Natural killer cell (primary cell): ENCODE measurements at regions of chr11 and their contacts with region 1.

Region 1: DNA sequence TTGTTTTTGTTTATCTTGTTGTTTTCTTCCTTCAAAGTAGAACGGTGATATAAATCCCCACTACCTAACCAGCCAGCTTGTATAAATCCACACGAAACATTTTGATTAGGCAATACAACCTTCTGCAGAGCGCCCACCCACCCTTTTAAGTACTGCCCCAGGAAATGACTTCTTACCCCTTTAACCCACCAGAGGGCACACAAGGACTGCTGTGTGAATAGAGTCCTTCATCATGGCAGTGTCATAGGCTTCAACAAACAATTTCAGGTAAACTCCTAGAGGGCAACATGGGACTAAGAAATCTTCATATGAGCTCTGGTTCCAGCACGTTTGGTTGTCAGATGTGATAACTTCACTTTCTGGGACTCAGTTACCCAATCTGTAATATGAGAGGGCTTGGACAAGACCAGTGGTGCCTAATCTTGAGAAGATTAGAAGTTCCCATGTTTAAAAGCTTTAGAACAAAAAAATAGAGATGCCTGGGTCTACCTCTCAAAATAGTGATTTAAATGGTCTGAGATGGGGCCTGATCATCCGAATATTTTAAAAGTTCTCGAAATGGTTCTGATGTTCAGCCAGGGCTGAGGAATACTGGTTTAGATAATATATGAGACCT is 56.1 kb downstream of the PIWIL4 start:
- DNase-seq: peak in 1 of 2 donors; percentile 72
- ATAC-seq: peak; percentile 55 to 82 (median 75)
- H3K4me3 ChIP-seq: no peak overlapping the region
- H3K4me3 Mint-ChIP-seq: no peak overlapping the region
- H3K27ac ChIP-seq: no peak overlapping the region
- H3K27ac Mint-ChIP-seq: no peak overlapping the region
- H3K4me1 ChIP-seq: no peaks in the 10 kb centered on the region
- H3K4me1 Mint-ChIP-seq: no peaks in the 10 kb centered on the region
- H3K27me3 ChIP-seq: no peaks in the 10 kb centered on the region
- H3K27me3 Mint-ChIP-seq: peaks cover 0 to 6% of the 10 kb centered on the region in 2 donors
- CTCF ChIP-seq: peak; percentile 48

Region 2: GRCh38 chr11:94876645-94877442 is 253.6 kb after region 1 on chr11:
- intact Hi-C with region 1: loop called (anchors 5 kb)
- DNase-seq: peak; percentile 25 to 35
- ATAC-seq: peak; percentile 78 to 99 (median 94)
- H3K4me3 ChIP-seq: no peak overlapping the region
- H3K4me3 Mint-ChIP-seq: no peak overlapping the region
- H3K27ac ChIP-seq: no peak overlapping the region
- H3K27ac Mint-ChIP-seq: peak overlapping the region; percentile 59 to 81
- H3K4me1 ChIP-seq: peaks cover 11% of the 10 kb centered on the region
- H3K4me1 Mint-ChIP-seq: peaks cover 9 to 12% of the 10 kb centered on the region in 2 donors
- H3K27me3 ChIP-seq: no peaks in the 10 kb centered on the region
- H3K27me3 Mint-ChIP-seq: no peaks in the 10 kb centered on the region
- CTCF ChIP-seq: no peak

Region 3: GRCh38 chr11:94897330-94897768 is 274.1 kb after region 1 on chr11:
- intact Hi-C with region 1: loop called (anchors 1 kb)
- DNase-seq: peak in 1 of 2 donors; percentile 52
- ATAC-seq: peak in 2 of 3 donors; percentile 65 to 72
- H3K4me3 ChIP-seq: no peak overlapping the region
- H3K4me3 Mint-ChIP-seq: no peak overlapping the region
- H3K27ac ChIP-seq: no peak overlapping the region
- H3K27ac Mint-ChIP-seq: no peak overlapping the region
- H3K4me1 ChIP-seq: no peaks in the 10 kb centered on the region
- H3K4me1 Mint-ChIP-seq: no peaks in the 10 kb centered on the region
- H3K27me3 ChIP-seq: no peaks in the 10 kb centered on the region
- H3K27me3 Mint-ChIP-seq: no peaks in the 10 kb centered on the region
- CTCF ChIP-seq: peak; percentile 93

Region 4: GRCh38 chr11:94973099-94973968 is 350.1 kb after region 1 on chr11 and contains the starts of genes CWC15 and KDM4D:
- intact Hi-C with region 1: loop called (anchors 5 kb)
- DNase-seq: peak; percentile 88 to 97
- ATAC-seq: peak; percentile 98 to 100 (median 99)
- H3K4me3 ChIP-seq: peak within 1 kb of the TSS; percentile 68
- H3K4me3 Mint-ChIP-seq: peak within 1 kb of the TSS; percentile 99
- H3K27ac ChIP-seq: peak within 1 kb of the TSS; percentile 71
- H3K27ac Mint-ChIP-seq: peak within 1 kb of the TSS; percentile 91 to 98
- H3K4me1 ChIP-seq: peaks cover 4% of the 10 kb centered on the region
- H3K4me1 Mint-ChIP-seq: peaks cover 25 to 35% of the 10 kb centered on the region in 2 donors
- H3K27me3 ChIP-seq: no peaks in the 10 kb centered on the region
- H3K27me3 Mint-ChIP-seq: peaks cover 15 to 17% of the 10 kb centered on the region in 2 donors
- CTCF ChIP-seq: no peak
- total RNA-seq, gene CWC15: 76.8 to 90.7 (median 81.3) TPM
- total RNA-seq, gene KDM4D: 0.14 to 0.32 TPM in 2 of 3 donors, not detected in the other

Region 5: DNA sequence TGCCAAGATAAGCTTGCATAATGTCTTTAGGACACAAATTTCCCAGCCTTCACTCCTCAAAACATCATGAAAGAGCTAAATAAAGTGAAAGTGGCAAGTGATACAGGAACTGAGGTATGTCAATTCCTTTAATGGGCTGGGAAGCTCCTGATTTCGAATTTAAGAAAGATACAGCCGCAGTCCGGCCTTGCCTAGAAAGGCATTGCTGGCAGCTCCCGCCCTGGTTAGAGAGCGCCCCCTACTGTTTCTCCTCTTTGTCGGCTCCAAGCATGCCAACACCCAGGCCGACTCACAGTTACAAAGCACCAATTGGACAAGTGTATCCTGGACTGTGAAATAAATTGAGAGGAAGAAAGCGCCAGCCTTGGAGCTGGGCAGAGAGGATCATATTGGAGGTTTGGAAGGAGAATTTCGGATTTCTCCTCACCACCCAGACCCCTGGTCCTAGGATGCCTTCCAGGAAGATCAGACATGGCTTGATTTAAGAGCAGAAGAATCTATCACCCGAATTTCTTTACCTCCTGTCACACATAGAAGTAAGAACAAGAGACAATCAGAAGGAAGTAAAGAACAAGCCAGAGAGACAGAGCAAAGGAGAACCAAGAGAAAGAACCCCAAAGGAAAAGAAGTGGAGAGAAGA is 1082.4 kb after region 1 on chr11:
- intact Hi-C with region 1: loop called (anchors 5 kb)
- DNase-seq: peak; percentile 57 to 93
- ATAC-seq: peak; percentile 89 to 94 (median 92)
- H3K4me3 ChIP-seq: no peak overlapping the region
- H3K4me3 Mint-ChIP-seq: no peak overlapping the region
- H3K27ac ChIP-seq: no peak overlapping the region
- H3K27ac Mint-ChIP-seq: no peak overlapping the region
- H3K4me1 ChIP-seq: peaks cover 3% of the 10 kb centered on the region
- H3K4me1 Mint-ChIP-seq: peaks cover 0 to 6% of the 10 kb centered on the region in 2 donors
- H3K27me3 ChIP-seq: no peaks in the 10 kb centered on the region
- H3K27me3 Mint-ChIP-seq: peaks cover 6 to 7% of the 10 kb centered on the region in 2 donors
- CTCF ChIP-seq: peak; percentile 83

Region 6: GRCh38 chr11:95764267-95764898 is 1141.2 kb after region 1 on chr11:
- intact Hi-C with region 1: loop called (anchors 10 kb)
- DNase-seq: peak in 1 of 2 donors; percentile 76
- ATAC-seq: peak; percentile 74 to 90 (median 77)
- H3K4me3 ChIP-seq: no peak overlapping the region
- H3K4me3 Mint-ChIP-seq: no peak overlapping the region
- H3K27ac ChIP-seq: no peak overlapping the region
- H3K27ac Mint-ChIP-seq: no peak overlapping the region
- H3K4me1 ChIP-seq: no peaks in the 10 kb centered on the region
- H3K4me1 Mint-ChIP-seq: no peaks in the 10 kb centered on the region
- H3K27me3 ChIP-seq: no peaks in the 10 kb centered on the region
- H3K27me3 Mint-ChIP-seq: peaks cover 8 to 30% of the 10 kb centered on the region in 2 donors
- CTCF ChIP-seq: peak; percentile 80

Region 7: DNA sequence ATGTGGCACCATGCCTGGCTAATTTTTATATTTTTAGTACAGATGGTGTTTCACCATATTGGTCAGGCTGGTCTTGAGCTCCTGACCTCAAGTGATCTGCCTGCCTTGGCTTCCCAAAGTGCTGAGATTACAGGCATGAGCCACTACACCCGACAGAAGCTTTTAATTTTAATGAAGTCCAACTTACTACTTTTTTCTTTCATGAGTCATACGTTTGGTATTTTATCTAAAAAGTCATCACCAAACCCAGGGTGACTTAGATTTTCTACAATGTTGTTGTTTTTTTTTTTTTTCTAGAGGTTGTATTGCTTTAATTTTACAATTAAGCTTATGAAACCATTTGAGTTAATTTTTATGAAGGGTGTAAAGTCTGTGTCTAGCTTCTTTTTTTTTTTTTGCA is 1801.5 kb after region 1 on chr11:
- intact Hi-C with region 1: loop called (anchors 5 kb)
- DNase-seq: no peak
- ATAC-seq: no peak
- H3K4me3 ChIP-seq: no peak overlapping the region
- H3K4me3 Mint-ChIP-seq: no peak overlapping the region
- H3K27ac ChIP-seq: no peak overlapping the region
- H3K27ac Mint-ChIP-seq: no peak overlapping the region
- H3K4me1 ChIP-seq: no peaks in the 10 kb centered on the region
- H3K4me1 Mint-ChIP-seq: no peaks in the 10 kb centered on the region
- H3K27me3 ChIP-seq: peaks cover 13% of the 10 kb centered on the region
- H3K27me3 Mint-ChIP-seq: peaks cover 27 to 60% of the 10 kb centered on the region in 2 donors
- CTCF ChIP-seq: no peak